Cardiac septum (tissue), 1 donor: ENCODE measurements at regions of chr13 and their contacts with region 1.

Region 1: GRCh38 chr13:30477346-30478195 is 11.8 kb upstream of the HMGB1 start:
- DNase-seq: no peak

Region 2: DNA sequence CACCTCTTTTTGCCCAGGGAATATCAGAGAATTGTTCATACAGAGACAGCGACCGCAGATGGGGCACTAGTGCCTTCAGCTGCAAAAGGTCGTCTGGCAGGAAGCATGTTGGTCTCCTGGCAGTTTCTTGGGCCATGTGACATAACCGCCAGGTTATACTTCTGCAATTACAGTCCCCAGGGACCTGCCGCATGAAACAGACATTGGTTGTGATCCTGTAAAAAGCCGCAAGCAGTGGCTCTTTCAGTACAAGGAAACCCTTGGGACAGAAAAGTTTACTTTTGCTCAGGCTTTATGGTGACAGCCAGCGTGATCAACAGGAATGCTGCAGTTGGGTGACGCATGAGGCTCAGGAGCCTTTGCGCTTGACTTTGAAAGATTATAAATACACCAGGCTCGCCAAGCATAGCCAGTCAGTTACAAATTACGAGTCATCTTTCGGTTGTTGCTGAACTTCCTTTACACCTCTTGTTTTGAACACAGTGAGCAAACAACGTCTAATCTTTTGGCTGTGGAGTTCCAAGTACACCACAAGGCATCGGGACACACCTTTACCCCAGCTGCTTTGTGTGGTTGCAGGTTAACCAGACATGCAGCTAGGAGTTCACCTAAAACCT is 105.8 kb before region 1 on chr13:
- intact Hi-C with region 1: no loop called
- DNase-seq: no peak

Region 3: GRCh38 chr13:30545320-30545719 is 67.7 kb after region 1 on chr13:
- intact Hi-C with region 1: loop called (anchors 10 kb)
- DNase-seq: no peak